Left colon (tissue), 2 donors: ENCODE measurements at regions of chr4 and their contacts with region 1.

Region 1: GRCh38 chr4:41214136-41214824 is at the start of gene APBB2:
- DNase-seq: peak; percentile 92 to 95
- ATAC-seq: peak; percentile 78
- total RNA-seq, gene APBB2: 28.2 to 30.7 TPM

Region 2: DNA sequence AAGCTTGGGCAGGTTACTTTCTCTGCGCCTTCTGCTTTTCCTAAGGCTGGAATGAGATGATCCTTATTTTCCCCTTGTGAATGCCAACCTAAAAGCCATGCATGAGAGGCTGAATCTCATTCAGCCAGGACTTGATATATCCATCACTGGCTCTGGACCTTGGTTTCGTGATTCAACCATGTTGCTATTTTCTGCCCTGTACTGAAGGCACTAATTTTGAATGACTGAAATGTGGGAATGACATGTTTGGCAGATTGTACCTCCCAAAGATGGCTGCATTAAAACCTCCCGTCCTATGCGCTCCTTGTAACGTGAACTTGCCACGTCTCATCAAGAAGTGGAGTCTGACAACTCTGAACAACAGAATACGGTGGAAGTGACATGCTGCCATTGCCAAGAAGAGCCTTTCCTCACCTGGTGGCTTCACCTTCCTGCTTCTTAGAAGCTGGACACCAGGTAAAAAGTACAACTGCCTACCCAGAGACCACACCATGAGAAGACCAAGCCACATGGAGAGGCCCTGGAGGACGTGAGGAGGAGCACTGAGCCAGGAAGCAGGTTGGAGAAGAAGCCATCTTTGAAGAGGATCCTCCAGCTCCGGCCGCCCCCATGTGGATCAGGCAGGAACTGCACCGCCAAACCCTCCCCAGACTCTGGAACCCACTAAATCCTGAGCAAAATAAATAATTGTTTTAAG is 290.0 kb before region 1 on chr4:
- intact Hi-C with region 1: loop called in 1 of 2 experiments (anchors 2 kb)
- DNase-seq: peak in 1 of 2 donors; percentile 70
- ATAC-seq: peak; percentile 71

Region 3: DNA sequence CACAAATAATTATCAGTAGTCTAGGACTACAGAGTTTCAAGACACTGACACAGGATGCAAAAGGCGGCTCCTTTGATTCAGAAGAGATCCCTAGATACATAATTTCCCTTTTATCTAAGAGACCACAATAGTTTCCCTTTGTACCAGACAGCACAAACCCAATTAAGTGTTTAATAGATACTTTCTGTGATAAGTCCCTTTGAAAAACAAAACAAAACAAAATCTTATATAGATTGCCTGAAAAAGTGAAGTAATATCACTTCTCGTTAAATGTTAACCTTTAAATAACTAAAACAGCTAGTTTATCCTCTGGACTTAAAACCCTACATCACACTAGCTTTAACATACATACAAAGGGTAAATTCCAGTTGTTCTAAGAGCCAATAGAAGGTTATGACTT is 49.9 kb before region 1 on chr4:
- intact Hi-C with region 1: no loop called
- DNase-seq: no peak
- ATAC-seq: no peak